ENCODE measurements at regions of chr18 and their contacts with region 1.

Region 1: GRCh38 chr18:3245853-3246634 is 1.6 kb upstream of the MYL12A start:
- DNase-seq: peak; percentile 92
- ATAC-seq: peak; percentile 55
- H3K4me3 Mint-ChIP-seq: peak overlapping the region; percentile 76
- H3K27ac Mint-ChIP-seq: peak overlapping the region; percentile 97
- H3K4me1 Mint-ChIP-seq: peaks cover 26% of the 10 kb centered on the region
- H3K27me3 Mint-ChIP-seq: no peaks in the 10 kb centered on the region

Region 2: GRCh38 chr18:2641638-2642037 is 604.4 kb before region 1 on chr18:
- CTCF ChIA-PET with region 1: no interaction called
- POLR2A ChIA-PET with region 1: no interaction called
- intact Hi-C with region 1: loop called (anchors 5 kb)
- DNase-seq: no peak
- ATAC-seq: peak; percentile 71
- H3K4me3 Mint-ChIP-seq: peak overlapping the region; percentile 63
- H3K27ac Mint-ChIP-seq: no peak overlapping the region
- H3K4me1 Mint-ChIP-seq: peaks cover 51% of the 10 kb centered on the region
- H3K27me3 Mint-ChIP-seq: no peaks in the 10 kb centered on the region

Region 3: DNA sequence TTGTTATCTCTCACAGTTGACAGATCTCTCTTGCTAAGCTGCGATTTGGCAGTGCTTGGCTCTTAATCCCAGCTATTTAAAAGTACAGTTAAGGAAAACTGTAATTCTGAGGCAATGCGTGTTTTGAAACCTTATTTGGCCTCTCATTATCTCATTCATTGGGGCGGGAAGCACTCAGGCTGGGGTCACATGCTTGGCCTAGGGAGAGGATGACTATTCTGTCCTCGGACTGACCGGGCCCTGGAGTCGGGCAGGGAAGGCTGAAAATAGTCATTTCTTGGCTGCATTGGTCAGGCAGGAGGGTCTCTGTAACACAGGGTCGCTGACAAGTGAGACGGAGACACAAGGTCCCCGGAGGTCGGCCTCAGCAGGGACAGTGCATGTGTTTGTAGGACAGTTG is 419.5 kb before region 1 on chr18:
- CTCF ChIA-PET with region 1: no interaction called
- POLR2A ChIA-PET with region 1: no interaction called
- intact Hi-C with region 1: no loop called
- DNase-seq: no peak
- ATAC-seq: no peak
- H3K4me3 Mint-ChIP-seq: no peak overlapping the region
- H3K27ac Mint-ChIP-seq: no peak overlapping the region
- H3K4me1 Mint-ChIP-seq: no peaks in the 10 kb centered on the region
- H3K27me3 Mint-ChIP-seq: no peaks in the 10 kb centered on the region

Region 4: GRCh38 chr18:2846636-2847364 is 399.2 kb before region 1 on chr18 and contains the start of gene EMILIN2:
- CTCF ChIA-PET with region 1: interaction called, 3 read pairs
- POLR2A ChIA-PET with region 1: interaction called, 5 read pairs
- intact Hi-C with region 1: loop called in 1 of 2 experiments (anchors 2 kb)
- DNase-seq: peak; percentile 73
- ATAC-seq: peak; percentile 21
- H3K4me3 Mint-ChIP-seq: peak within 1 kb of the TSS; percentile 76
- H3K27ac Mint-ChIP-seq: peak within 1 kb of the TSS; percentile 64
- H3K4me1 Mint-ChIP-seq: peaks cover 36% of the 10 kb centered on the region
- H3K27me3 Mint-ChIP-seq: peaks cover 34% of the 10 kb centered on the region
- total RNA-seq, gene EMILIN2: 12.0 to 15.7 TPM

Region 5: GRCh38 chr18:2971741-2972552 is 274.1 kb before region 1 on chr18:
- CTCF ChIA-PET with region 1: interaction called, 12 read pairs
- POLR2A ChIA-PET with region 1: interaction called, 3 read pairs
- intact Hi-C with region 1: no loop called
- DNase-seq: peak; percentile 86
- ATAC-seq: peak; percentile 74
- H3K4me3 Mint-ChIP-seq: peak overlapping the region; percentile 81
- H3K27ac Mint-ChIP-seq: peak overlapping the region; percentile 99
- H3K4me1 Mint-ChIP-seq: peaks cover 91% of the 10 kb centered on the region
- H3K27me3 Mint-ChIP-seq: no peaks in the 10 kb centered on the region

Region 6: DNA sequence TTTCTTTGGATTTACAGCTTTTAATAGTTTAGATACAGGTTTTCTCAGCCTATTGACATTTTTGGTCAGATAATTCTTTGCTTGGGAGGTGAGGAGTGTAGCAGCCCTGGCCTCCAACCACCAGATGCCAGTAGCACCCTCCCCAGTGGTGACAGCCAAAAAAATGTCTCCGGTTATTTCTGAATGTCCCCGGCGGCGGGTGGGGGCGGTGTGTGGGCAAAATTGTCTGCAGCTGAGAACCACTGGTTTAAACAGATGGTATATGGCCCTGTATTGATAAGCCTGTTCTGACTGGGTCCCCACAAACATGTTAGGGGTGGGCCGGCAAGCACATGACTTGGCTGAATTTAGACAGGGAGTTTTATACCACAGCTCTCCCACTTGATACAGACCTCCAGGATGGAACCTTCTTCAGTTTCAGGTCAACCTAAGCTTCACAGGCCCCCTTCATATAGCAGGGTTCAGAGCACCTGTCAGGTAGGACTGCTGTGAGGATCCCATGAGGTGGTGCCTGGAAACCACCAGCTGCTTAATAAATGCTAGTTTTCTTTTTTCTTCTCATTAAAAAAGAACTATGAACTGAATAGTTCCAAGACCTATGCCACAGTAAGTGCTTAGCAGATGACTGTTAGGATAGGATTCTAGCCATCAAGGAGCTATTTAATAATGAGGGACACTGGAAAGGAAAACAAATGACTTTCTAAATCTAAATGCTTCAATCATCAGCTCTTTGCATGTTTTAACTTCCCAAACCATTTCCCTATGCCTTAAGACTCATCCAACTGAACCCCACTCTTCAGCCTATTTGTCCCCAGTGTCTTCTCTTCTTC is 251.2 kb before region 1 on chr18:
- CTCF ChIA-PET with region 1: interaction called, 15 read pairs
- POLR2A ChIA-PET with region 1: no interaction called
- intact Hi-C with region 1: loop called in 1 of 2 experiments (anchors 1 kb)
- DNase-seq: peak; percentile 85
- ATAC-seq: peak; percentile 38
- H3K4me3 Mint-ChIP-seq: no peak overlapping the region
- H3K27ac Mint-ChIP-seq: peak overlapping the region; percentile 80
- H3K4me1 Mint-ChIP-seq: peaks cover 90% of the 10 kb centered on the region
- H3K27me3 Mint-ChIP-seq: no peaks in the 10 kb centered on the region

Region 7: GRCh38 chr18:3151399-3152264 is 94.4 kb before region 1 on chr18:
- CTCF ChIA-PET with region 1: interaction called, 27 read pairs
- POLR2A ChIA-PET with region 1: no interaction called
- intact Hi-C with region 1: loop called (anchors 1 to 2 kb)
- DNase-seq: no peak
- ATAC-seq: no peak
- H3K4me3 Mint-ChIP-seq: no peak overlapping the region
- H3K27ac Mint-ChIP-seq: no peak overlapping the region
- H3K4me1 Mint-ChIP-seq: peaks cover 4% of the 10 kb centered on the region
- H3K27me3 Mint-ChIP-seq: no peaks in the 10 kb centered on the region

Region 8: DNA sequence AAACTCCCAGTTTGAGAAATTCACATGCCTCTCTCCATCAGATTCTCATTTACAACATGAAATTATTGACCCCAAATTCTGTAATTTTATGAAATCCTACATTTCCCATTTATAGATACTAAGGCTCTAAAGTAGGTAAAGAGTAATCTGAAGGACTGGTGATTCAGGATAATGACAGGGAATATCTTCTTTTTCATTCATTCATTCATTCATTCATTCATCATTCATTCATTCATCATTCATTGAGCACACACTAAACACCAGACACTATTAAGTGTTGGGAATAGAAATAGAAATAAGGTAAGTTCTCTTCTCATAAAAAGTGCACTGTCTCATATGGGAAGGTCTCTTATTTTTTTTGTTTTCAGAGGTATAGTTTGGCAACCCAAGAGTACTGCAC is 320.8 kb after region 1 on chr18:
- CTCF ChIA-PET with region 1: no interaction called
- POLR2A ChIA-PET with region 1: no interaction called
- intact Hi-C with region 1: no loop called
- DNase-seq: no peak
- ATAC-seq: no peak
- H3K4me3 Mint-ChIP-seq: no peak overlapping the region
- H3K27ac Mint-ChIP-seq: no peak overlapping the region
- H3K4me1 Mint-ChIP-seq: no peaks in the 10 kb centered on the region
- H3K27me3 Mint-ChIP-seq: no peaks in the 10 kb centered on the region